ENCODE measurements at regions of chr7 and their contacts with region 1.

Region 1: DNA sequence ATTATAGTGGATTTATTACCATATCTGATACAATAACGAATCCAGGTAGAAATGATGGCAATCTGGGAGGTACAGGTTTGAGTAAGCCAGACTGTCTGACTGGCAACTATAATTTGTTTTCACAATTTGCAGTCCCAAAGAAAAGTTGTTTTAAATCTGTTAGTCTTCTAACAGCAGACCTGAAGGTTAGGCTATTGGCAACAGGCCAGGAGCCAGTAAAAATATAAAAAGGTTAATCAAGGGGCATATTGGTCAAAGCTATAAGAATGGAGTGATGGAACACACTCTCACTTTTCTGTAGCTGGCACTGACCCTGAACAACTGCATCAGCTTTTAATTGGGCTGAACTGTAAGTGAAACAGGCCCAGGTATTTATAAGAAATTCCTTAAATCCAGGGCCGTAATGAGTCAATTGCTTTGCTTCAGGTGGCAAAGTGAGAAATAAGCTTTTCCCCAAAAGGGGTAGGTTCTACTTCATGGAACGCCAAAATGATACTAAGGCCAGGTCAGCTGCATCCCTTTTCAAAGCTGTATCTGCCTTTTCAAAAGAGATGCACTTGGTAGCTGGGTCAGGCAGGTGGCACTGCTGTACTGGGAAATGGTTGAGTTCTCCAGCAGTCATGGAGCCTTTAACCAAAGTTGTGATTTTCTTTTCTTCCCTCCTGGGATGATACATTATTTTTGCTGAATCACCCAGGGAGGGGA is 7.0 kb upstream of the GPR22 start:
- DNase-seq: peak; percentile 34 to 64
- ATAC-seq: peak; percentile 85 to 97 (median 88)
- H3K4me3 ChIP-seq: no peak overlapping the region
- H3K27ac ChIP-seq: no peak overlapping the region
- H3K4me1 ChIP-seq: no peaks in the 10 kb centered on the region
- H3K27me3 ChIP-seq: no peaks in the 10 kb centered on the region
- CTCF ChIP-seq: peak; percentile 77

Region 2: GRCh38 chr7:107304636-107305035 is 158.3 kb before region 1 on chr7:
- intact Hi-C with region 1: no loop called
- DNase-seq: no peak
- ATAC-seq: no peak
- H3K4me3 ChIP-seq: no peak overlapping the region
- H3K27ac ChIP-seq: no peak overlapping the region
- H3K4me1 ChIP-seq: peaks cover 5% of the 10 kb centered on the region
- H3K27me3 ChIP-seq: no peaks in the 10 kb centered on the region
- CTCF ChIP-seq: no peak

Region 3: GRCh38 chr7:107501593-107501992 is 38.7 kb after region 1 on chr7:
- intact Hi-C with region 1: no loop called
- DNase-seq: no peak
- ATAC-seq: peak in 1 of 4 donors; percentile 60
- H3K4me3 ChIP-seq: no peak overlapping the region
- H3K27ac ChIP-seq: no peak overlapping the region
- H3K4me1 ChIP-seq: peaks cover 5% of the 10 kb centered on the region
- H3K27me3 ChIP-seq: no peaks in the 10 kb centered on the region
- CTCF ChIP-seq: peak; percentile 28

Region 4: GRCh38 chr7:107609811-107610261 is 146.9 kb after region 1 on chr7:
- intact Hi-C with region 1: loop called in 1 of 2 experiments (anchors 5 kb)
- DNase-seq: no peak
- ATAC-seq: peak; percentile 77 to 90 (median 86)
- H3K4me3 ChIP-seq: peak overlapping the region; percentile 41
- H3K27ac ChIP-seq: peak overlapping the region; percentile 74
- H3K4me1 ChIP-seq: peaks cover 28% of the 10 kb centered on the region
- H3K27me3 ChIP-seq: no peaks in the 10 kb centered on the region
- CTCF ChIP-seq: no peak

Measured in psoas muscle (tissue), 8 donors.